Activated B cell treated with CpG ODN at 0.5 μM for 24 hours (primary cell): ENCODE measurements at regions of chr16 and their contacts with region 1.

Region 1: GRCh38 chr16:10743610-10744393 is at the start of gene NUBP1:
- DNase-seq: peak; percentile 98
- ATAC-seq: peak; percentile 94
- H3K4me3 Mint-ChIP-seq: peak within 1 kb of the TSS; percentile 94
- H3K27ac Mint-ChIP-seq: peak within 1 kb of the TSS; percentile 99
- H3K4me1 Mint-ChIP-seq: peaks cover 69% of the 10 kb centered on the region
- H3K27me3 Mint-ChIP-seq: no peaks in the 10 kb centered on the region
- CTCF ChIP-seq: no peak
- total RNA-seq, gene NUBP1: 74.1 and 77.2 TPM in 2 replicates

Region 2: GRCh38 chr16:10385725-10386516 is 357.9 kb before region 1 on chr16 and contains the start of gene ATF7IP2:
- CTCF ChIA-PET with region 1: no interaction called
- POLR2A ChIA-PET with region 1: no interaction called
- intact Hi-C with region 1: loop called (anchors 10 kb)
- DNase-seq: peak; percentile 86
- ATAC-seq: peak; percentile 99
- H3K4me3 Mint-ChIP-seq: peak within 1 kb of the TSS; percentile 99
- H3K27ac Mint-ChIP-seq: peak within 1 kb of the TSS; percentile 96
- H3K4me1 Mint-ChIP-seq: peaks cover 49% of the 10 kb centered on the region
- H3K27me3 Mint-ChIP-seq: no peaks in the 10 kb centered on the region
- CTCF ChIP-seq: no peak
- total RNA-seq, gene ATF7IP2: 48.6 and 55.9 TPM in 2 replicates

Region 3: GRCh38 chr16:10558746-10559641 is 184.8 kb before region 1 on chr16:
- CTCF ChIA-PET with region 1: no interaction called
- POLR2A ChIA-PET with region 1: no interaction called
- intact Hi-C with region 1: no loop called
- DNase-seq: no peak
- ATAC-seq: no peak
- H3K4me3 Mint-ChIP-seq: no peak overlapping the region
- H3K27ac Mint-ChIP-seq: no peak overlapping the region
- H3K4me1 Mint-ChIP-seq: peaks cover 24% of the 10 kb centered on the region
- H3K27me3 Mint-ChIP-seq: no peaks in the 10 kb centered on the region
- CTCF ChIP-seq: no peak

Region 4: DNA sequence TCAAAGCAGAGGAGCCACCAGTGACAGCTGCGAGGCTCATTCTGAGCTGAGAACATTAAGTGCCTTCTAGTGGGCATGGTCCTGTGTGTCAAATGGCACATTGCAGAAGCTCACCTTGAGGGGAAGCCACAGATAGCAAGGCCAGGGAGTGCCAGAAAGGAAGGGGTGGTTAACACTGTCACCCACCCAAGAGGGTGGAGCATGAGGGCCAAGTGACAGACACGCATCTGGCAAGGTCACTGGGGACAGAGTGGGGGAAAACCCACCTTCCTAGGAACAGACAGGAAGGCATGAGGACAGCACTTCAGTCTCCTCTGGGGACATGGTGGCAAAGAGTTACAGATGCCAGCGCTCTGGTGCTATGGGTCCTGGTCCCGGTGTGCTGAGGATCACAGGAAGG is 22.0 kb after region 1 on chr16:
- CTCF ChIA-PET with region 1: no interaction called
- POLR2A ChIA-PET with region 1: interaction called, 13 read pairs
- intact Hi-C with region 1: loop called (anchors 1 kb)
- DNase-seq: peak; percentile 57
- ATAC-seq: peak; percentile 97
- H3K4me3 Mint-ChIP-seq: peak overlapping the region; percentile 56
- H3K27ac Mint-ChIP-seq: peak overlapping the region; percentile 84
- H3K4me1 Mint-ChIP-seq: peaks cover 44% of the 10 kb centered on the region
- H3K27me3 Mint-ChIP-seq: no peaks in the 10 kb centered on the region
- CTCF ChIP-seq: no peak

Region 5: GRCh38 chr16:10800886-10801285 is 57.1 kb after region 1 on chr16:
- CTCF ChIA-PET with region 1: no interaction called
- POLR2A ChIA-PET with region 1: interaction called, 12 read pairs
- intact Hi-C with region 1: loop called (anchors 5 kb)
- DNase-seq: no peak
- ATAC-seq: no peak
- H3K4me3 Mint-ChIP-seq: no peak overlapping the region
- H3K27ac Mint-ChIP-seq: no peak overlapping the region
- H3K4me1 Mint-ChIP-seq: peaks cover 43% of the 10 kb centered on the region
- H3K27me3 Mint-ChIP-seq: no peaks in the 10 kb centered on the region
- CTCF ChIP-seq: no peak

Region 6: DNA sequence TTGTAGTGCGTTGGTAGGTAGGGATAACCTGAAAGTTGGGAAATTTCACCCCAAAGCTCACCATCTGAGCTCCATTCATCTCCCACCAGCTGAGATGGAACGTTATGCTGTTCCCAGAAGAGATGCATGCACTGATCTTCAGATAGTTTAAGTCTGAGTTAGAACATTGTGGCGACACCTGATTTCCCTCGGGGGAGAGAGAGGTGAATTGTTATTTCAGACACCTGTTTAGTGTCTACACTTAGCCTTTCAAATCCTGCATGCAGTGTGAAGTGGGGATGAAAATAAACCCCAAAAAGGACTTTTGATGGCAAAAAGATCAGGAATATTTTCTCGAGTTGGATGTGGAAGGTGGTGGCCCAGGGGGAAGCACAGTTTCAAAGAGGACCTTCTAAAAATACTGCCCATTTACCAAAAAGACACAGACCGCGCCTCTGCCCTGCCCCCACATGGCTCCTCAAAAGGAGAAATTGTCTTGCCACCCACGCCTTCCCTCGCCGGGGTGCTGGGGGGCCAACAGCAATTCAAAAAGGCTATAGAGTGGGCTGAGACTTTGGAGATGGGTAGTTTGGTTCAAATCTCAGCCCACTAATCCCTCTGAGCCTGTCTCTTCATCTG is 144.6 kb after region 1 on chr16:
- CTCF ChIA-PET with region 1: no interaction called
- POLR2A ChIA-PET with region 1: interaction called, 40 read pairs
- intact Hi-C with region 1: no loop called
- DNase-seq: no peak
- ATAC-seq: peak; percentile 6
- H3K4me3 Mint-ChIP-seq: peak overlapping the region; percentile 82
- H3K27ac Mint-ChIP-seq: peak overlapping the region; percentile 87
- H3K4me1 Mint-ChIP-seq: peaks cover 99% of the 10 kb centered on the region
- H3K27me3 Mint-ChIP-seq: no peaks in the 10 kb centered on the region
- CTCF ChIP-seq: no peak

Region 7: DNA sequence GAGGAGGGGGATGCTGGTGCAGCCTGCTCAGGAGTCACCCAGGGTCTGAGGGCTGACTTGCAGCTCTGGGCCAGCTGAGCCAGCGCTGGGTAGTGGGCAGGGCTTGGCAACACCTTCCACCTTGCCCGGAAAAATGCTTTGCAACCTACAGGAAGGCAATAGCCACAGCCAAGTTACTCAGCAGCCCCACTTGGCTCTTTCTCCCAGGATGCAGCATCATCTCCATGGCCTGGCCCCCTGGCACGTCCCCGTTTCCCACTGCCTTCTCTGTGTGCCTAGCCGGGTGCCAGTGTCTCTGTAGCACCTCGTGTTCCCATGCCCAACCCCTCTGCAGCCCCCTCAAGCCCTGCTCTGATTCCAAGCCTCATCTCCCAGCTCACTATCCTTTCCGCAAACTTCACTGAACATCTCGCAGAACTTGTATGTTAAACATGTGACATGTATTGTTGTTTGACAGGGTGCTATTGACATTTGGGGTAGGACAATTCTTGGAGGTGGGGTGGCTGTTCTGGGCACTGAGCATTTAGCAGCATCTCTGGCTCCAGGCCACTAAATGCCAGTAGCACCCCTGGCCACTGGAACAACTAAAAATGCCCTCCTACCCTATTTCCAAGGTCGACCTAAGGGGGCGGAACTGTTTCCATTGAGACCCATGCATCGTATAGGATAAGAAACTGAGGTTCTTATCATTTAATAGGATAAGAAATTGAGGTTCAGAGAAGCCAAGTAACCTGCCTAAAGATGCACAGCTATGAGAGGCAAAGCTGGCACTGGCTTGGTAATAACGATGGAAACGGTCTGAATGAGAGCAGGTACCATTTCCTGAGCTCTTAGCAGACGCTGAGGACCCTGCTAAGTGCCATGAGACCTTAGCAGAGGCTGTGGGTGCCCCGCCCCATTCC is 186.3 kb after region 1 on chr16:
- CTCF ChIA-PET with region 1: interaction called, 3 read pairs
- POLR2A ChIA-PET with region 1: interaction called, 10 read pairs
- intact Hi-C with region 1: no loop called
- DNase-seq: no peak
- ATAC-seq: peak; percentile 14
- H3K4me3 Mint-ChIP-seq: peak overlapping the region; percentile 5
- H3K27ac Mint-ChIP-seq: peak overlapping the region; percentile 71
- H3K4me1 Mint-ChIP-seq: peaks cover 54% of the 10 kb centered on the region
- H3K27me3 Mint-ChIP-seq: no peaks in the 10 kb centered on the region
- CTCF ChIP-seq: no peak

Region 8: DNA sequence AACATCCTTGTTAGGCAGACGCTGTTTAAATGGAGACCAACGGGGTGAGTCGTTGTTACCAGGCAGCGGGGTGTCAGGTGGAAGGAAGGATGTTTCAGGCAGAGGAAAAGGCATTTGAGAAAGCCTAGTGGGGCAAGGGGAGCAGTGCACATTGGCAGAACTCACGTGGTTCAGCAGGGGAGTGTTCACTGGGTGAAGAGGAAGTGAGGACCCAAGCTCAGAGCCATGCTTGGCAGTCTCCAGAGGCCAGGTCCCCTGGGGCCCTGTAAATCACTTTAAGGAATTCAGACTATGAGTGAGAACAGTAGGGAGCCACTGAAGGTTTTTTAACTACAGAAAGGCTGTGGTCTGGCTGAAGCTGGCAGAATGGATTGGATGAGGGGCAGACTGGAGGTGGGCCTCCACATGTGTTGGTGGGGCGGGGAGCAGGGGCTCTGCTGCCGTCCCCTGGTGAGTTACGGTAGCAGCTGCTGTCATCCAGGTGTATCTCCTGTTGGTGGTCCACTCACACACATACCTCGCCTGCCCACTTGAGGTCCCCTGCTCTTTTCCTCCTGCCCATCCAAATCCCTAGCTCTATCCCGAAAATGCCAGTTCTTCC is 205.7 kb after region 1 on chr16:
- CTCF ChIA-PET with region 1: no interaction called
- POLR2A ChIA-PET with region 1: interaction called, 18 read pairs
- intact Hi-C with region 1: loop called (anchors 1 kb)
- DNase-seq: peak; percentile 74
- ATAC-seq: peak; percentile 95
- H3K4me3 Mint-ChIP-seq: peak overlapping the region; percentile 75
- H3K27ac Mint-ChIP-seq: peak overlapping the region; percentile 94
- H3K4me1 Mint-ChIP-seq: peaks cover 70% of the 10 kb centered on the region
- H3K27me3 Mint-ChIP-seq: no peaks in the 10 kb centered on the region
- CTCF ChIP-seq: no peak